Activated CD4-positive, alpha-beta T cell treated with anti-CD3 and anti-CD28 coated beads for 36 hours (primary cell): ENCODE measurements at regions of chr1 and their contacts with region 1.

Region 1: GRCh38 chr1:184386312-184387068 is at the start of gene C1orf21:
- DNase-seq: peak; percentile 89
- ATAC-seq: peak; percentile 95
- H3K4me3 Mint-ChIP-seq: peak within 1 kb of the TSS; percentile 66
- H3K27ac Mint-ChIP-seq: peak within 1 kb of the TSS; percentile 38
- H3K4me1 Mint-ChIP-seq: peaks cover 12% of the 10 kb centered on the region
- H3K27me3 Mint-ChIP-seq: peaks cover 44% of the 10 kb centered on the region
- total RNA-seq, gene C1orf21: 2.6 to 6.1 TPM

Region 2: GRCh38 chr1:184036517-184036949 is 350.0 kb before region 1 on chr1:
- CTCF ChIA-PET with region 1: no interaction called
- POLR2A ChIA-PET with region 1: no interaction called
- intact Hi-C with region 1: loop called in 1 of 2 experiments (anchors 10 kb)
- DNase-seq: peak; percentile 24
- ATAC-seq: peak; percentile 5
- H3K4me3 Mint-ChIP-seq: peak overlapping the region; percentile 61
- H3K27ac Mint-ChIP-seq: no peak overlapping the region
- H3K4me1 Mint-ChIP-seq: peaks cover 9% of the 10 kb centered on the region
- H3K27me3 Mint-ChIP-seq: peaks cover 56% of the 10 kb centered on the region

Region 3: DNA sequence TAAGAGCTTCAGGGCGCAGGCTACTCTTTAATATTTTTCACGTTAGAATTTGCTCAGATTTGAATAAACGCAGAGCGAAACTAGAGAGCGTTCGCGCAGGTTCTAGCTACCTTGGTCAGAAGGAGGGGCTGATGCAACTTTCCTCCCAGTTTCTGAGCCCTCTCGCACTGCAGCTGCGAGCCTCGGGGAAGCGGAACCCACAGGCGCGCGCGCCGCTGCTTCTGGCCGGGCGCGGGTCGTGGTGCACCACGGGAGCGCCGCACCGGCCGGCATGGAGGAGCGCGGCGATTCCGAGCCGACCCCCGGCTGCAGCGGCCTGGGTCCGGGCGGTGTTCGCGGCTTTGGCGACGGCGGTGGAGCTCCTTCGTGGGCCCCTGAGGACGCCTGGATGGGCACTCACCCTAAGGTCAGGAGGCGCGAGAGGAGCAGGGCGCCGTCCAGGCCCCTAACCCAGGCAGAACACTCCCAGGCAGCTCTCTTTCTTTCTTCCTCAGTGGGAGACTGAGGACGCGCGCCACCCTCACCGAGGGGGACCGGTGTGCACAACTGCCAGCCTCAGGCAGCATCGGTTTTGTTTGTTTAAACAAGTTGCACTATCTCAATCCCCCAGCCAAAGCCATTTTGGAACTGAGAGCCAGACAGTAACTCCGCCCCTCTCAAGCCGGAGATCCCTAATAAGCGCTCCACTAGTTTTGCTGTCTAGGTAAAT is 334.9 kb before region 1 on chr1 and contains the start of gene TSEN15:
- CTCF ChIA-PET with region 1: no interaction called
- POLR2A ChIA-PET with region 1: no interaction called
- intact Hi-C with region 1: loop called (anchors 1 to 10 kb)
- DNase-seq: peak; percentile 89
- ATAC-seq: peak; percentile 97
- H3K4me3 Mint-ChIP-seq: peak within 1 kb of the TSS; percentile 93
- H3K27ac Mint-ChIP-seq: peak within 1 kb of the TSS; percentile 99
- H3K4me1 Mint-ChIP-seq: peaks cover 33% of the 10 kb centered on the region
- H3K27me3 Mint-ChIP-seq: peaks cover 9% of the 10 kb centered on the region
- total RNA-seq, gene TSEN15: 44.1 to 47.3 TPM

Region 4: GRCh38 chr1:184419728-184420161 is 33.3 kb after region 1 on chr1:
- CTCF ChIA-PET with region 1: no interaction called
- POLR2A ChIA-PET with region 1: no interaction called
- intact Hi-C with region 1: no loop called
- DNase-seq: no peak
- ATAC-seq: no peak
- H3K4me3 Mint-ChIP-seq: no peak overlapping the region
- H3K27ac Mint-ChIP-seq: no peak overlapping the region
- H3K4me1 Mint-ChIP-seq: no peaks in the 10 kb centered on the region
- H3K27me3 Mint-ChIP-seq: peaks cover 2% of the 10 kb centered on the region

Region 5: GRCh38 chr1:184494929-184495328 is 108.4 kb after region 1 on chr1:
- CTCF ChIA-PET with region 1: no interaction called
- POLR2A ChIA-PET with region 1: no interaction called
- intact Hi-C with region 1: loop called in 1 of 2 experiments (anchors 2 kb)
- DNase-seq: no peak
- ATAC-seq: no peak
- H3K4me3 Mint-ChIP-seq: no peak overlapping the region
- H3K27ac Mint-ChIP-seq: no peak overlapping the region
- H3K4me1 Mint-ChIP-seq: peaks cover 17% of the 10 kb centered on the region
- H3K27me3 Mint-ChIP-seq: no peaks in the 10 kb centered on the region